CD4-positive, alpha-beta T cell (primary cell): ENCODE measurements at regions of chr16 and their contacts with region 1.

Region 1: DNA sequence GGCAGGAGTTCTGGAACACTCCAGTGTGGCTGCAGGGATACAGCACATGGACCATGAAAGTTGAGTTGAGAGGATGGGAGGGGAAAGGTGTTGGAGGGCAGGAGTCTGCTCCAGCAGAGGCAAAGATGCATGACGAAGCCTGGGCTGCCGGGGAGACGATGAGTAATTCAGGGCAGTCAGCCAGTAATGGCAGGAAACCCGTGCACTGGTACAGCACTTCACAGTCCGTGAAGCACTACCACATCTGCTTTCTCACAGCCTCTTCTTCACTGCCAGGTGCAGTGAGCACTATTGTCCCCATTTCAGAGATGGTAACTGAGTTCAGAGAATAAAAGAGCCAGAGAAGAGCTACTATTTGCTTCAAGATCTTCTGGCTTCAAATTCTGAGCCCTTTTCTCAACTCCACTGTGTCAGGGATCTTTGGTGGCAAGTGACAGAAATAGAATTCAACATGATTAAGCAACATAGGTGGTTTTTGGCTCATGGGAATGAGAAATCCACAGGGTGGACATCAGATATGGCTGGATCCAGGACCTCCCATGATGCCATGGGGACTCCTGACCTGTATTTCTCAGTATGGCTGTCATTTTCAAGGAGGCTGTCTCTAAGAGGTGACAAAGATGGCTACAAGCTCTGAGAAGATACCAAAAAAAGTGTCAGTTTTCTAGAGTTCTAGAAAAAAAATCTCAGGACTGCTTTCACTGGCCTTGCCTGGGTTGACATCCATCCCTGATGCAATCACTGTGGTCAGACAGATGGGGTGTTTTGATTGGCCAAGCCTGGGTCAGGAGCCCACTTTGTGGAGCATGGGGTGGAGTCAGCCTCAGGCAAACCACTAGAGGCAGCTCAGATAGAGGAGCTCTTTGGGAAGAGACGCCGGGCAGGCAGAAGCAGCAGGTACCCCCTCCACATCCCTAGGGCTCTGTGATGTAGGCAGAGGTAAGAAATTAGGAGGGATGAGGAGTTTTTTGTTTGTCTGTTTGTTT is 24.7 kb downstream of the IL21R start:
- DNase-seq: peak; percentile 47 to 86 (median 76)
- ATAC-seq: peak; percentile 94
- H3K4me3 ChIP-seq: no peak overlapping the region
- H3K4me3 Mint-ChIP-seq: no peak overlapping the region
- H3K27ac ChIP-seq: peak overlapping the region; percentile 1 to 13
- H3K27ac Mint-ChIP-seq: peak overlapping the region; percentile 69
- H3K4me1 ChIP-seq: peaks cover 34% of the 10 kb centered on the region
- H3K4me1 Mint-ChIP-seq: peaks cover 61% of the 10 kb centered on the region
- H3K27me3 ChIP-seq: no peaks in the 10 kb centered on the region
- H3K27me3 Mint-ChIP-seq: no peaks in the 10 kb centered on the region
- CTCF ChIP-seq: no peak

Region 2: GRCh38 chr16:27413956-27414355 is 12.8 kb before region 1 on chr16:
- CTCF ChIA-PET with region 1: no interaction called
- POLR2A ChIA-PET with region 1: no interaction called
- intact Hi-C with region 1: loop called in 1 of 2 experiments (anchors 1 kb)
- DNase-seq: no peak
- ATAC-seq: no peak
- H3K4me3 ChIP-seq: no peak overlapping the region
- H3K4me3 Mint-ChIP-seq: no peak overlapping the region
- H3K27ac ChIP-seq: no peak overlapping the region
- H3K27ac Mint-ChIP-seq: peak overlapping the region; percentile 63
- H3K4me1 ChIP-seq: peaks cover 3% of the 10 kb centered on the region
- H3K4me1 Mint-ChIP-seq: peaks cover 72% of the 10 kb centered on the region
- H3K27me3 ChIP-seq: no peaks in the 10 kb centered on the region
- H3K27me3 Mint-ChIP-seq: no peaks in the 10 kb centered on the region
- CTCF ChIP-seq: no peak

Region 3: GRCh38 chr16:27441998-27442397 is 15.3 kb after region 1 on chr16:
- CTCF ChIA-PET with region 1: no interaction called
- POLR2A ChIA-PET with region 1: interaction called, 4 read pairs
- intact Hi-C with region 1: loop called in 1 of 2 experiments (anchors 2 kb)
- DNase-seq: no peak
- ATAC-seq: no peak
- H3K4me3 ChIP-seq: no peak overlapping the region
- H3K4me3 Mint-ChIP-seq: no peak overlapping the region
- H3K27ac ChIP-seq: no peak overlapping the region
- H3K27ac Mint-ChIP-seq: peak overlapping the region; percentile 24
- H3K4me1 ChIP-seq: peaks cover 23% of the 10 kb centered on the region
- H3K4me1 Mint-ChIP-seq: peaks cover 27% of the 10 kb centered on the region
- H3K27me3 ChIP-seq: no peaks in the 10 kb centered on the region
- H3K27me3 Mint-ChIP-seq: no peaks in the 10 kb centered on the region
- CTCF ChIP-seq: no peak